WTC11 (cell line): ENCODE measurements at regions of chr3 and their contacts with region 1.

Region 1: DNA sequence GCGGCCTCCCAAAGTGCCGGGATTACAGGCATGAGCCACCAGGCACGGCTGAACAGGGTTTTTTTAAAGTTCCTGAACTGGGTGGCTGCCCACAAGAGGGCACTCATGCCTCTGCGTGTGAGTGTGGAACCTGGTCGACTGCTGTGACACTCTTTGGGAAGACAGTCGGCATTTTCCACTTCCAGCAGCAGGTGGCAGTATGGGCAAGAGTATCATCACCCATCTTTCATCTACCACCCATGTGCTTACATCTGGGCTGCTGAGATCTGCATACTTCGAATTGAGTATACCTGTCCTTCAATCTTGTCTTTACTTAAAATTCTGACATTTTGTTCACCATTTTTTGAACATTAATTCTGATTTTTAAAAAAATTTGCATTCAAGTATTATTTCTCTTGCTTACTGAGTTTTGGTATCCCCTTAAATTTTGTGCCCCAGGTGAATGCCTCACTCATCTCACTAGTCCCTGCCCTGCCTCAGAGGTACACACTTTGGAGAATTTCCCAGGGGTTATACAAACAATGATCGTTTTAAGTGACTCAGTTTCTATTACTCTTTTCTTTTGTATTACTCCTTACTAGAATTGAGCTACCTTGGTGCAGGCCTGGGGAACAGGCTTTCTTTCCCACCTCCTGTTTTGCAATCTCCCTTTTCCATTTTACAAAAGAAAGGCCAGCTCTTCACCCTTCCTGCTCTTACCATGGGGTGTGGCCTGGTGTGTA is 11.8 kb downstream of the CLEC3B start:
- DNase-seq: peak; percentile 94
- ATAC-seq: peak; percentile 79
- H3K4me3 Mint-ChIP-seq: peak overlapping the region; percentile 43
- H3K27ac Mint-ChIP-seq: no peak overlapping the region
- H3K4me1 Mint-ChIP-seq: peaks cover 27% of the 10 kb centered on the region
- H3K27me3 Mint-ChIP-seq: peaks cover 51% of the 10 kb centered on the region
- CTCF ChIP-seq: peak; percentile 70

Region 2: GRCh38 chr3:45055411-45056143 is 17.7 kb after region 1 on chr3:
- CTCF ChIA-PET with region 1: interaction called, 20 read pairs
- POLR2A ChIA-PET with region 1: no interaction called
- DNase-seq: peak; percentile 34
- ATAC-seq: peak; percentile 67
- H3K4me3 Mint-ChIP-seq: no peak overlapping the region
- H3K27ac Mint-ChIP-seq: no peak overlapping the region
- H3K4me1 Mint-ChIP-seq: peaks cover 19% of the 10 kb centered on the region
- H3K27me3 Mint-ChIP-seq: peaks cover 92% of the 10 kb centered on the region
- CTCF ChIP-seq: 0 out of 2 replicates have a peak, but pooled peaks have one; percentile 11

Region 3: GRCh38 chr3:45218578-45219390 is 180.9 kb after region 1 on chr3:
- CTCF ChIA-PET with region 1: interaction called, 11 read pairs
- POLR2A ChIA-PET with region 1: no interaction called
- DNase-seq: no peak
- ATAC-seq: no peak
- H3K4me3 Mint-ChIP-seq: no peak overlapping the region
- H3K27ac Mint-ChIP-seq: no peak overlapping the region
- H3K4me1 Mint-ChIP-seq: peaks cover 13% of the 10 kb centered on the region
- H3K27me3 Mint-ChIP-seq: peaks cover 8% of the 10 kb centered on the region
- CTCF ChIP-seq: no peak

Region 4: DNA sequence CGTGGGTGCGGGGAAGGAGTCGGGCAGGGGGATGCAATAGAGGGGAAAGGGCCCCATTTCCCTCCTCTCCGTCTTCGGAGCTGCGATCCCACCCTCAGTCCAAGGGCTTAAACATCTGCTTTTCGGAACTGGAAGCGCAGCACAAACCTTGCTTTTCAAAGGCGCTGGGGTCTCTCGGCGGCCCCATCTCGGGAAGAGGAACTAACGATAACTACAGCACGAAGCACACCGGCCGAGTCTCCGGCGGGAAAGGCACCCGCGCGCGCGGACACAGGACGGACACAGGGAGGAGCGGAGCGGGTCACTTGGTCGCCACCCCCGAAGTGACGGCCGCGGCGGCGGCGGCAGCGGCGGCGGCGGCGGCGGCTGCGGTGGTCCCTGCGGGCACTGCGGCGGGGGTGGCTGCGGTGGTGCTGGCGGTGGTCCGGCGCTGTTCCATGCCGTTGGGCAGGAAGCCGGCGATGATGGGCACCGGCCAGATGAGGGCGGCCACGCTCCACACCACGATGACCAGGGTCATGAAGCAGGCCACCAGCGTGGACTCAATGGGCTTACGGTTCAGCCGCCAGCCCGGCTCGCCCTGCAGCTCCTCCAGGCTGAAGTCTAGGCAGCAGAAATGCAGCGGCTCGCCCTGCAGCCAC is 187.0 kb after region 1 on chr3:
- CTCF ChIA-PET with region 1: interaction called, 11 read pairs
- POLR2A ChIA-PET with region 1: no interaction called
- DNase-seq: peak; percentile 81
- ATAC-seq: peak; percentile 73
- H3K4me3 Mint-ChIP-seq: peak overlapping the region; percentile 91
- H3K27ac Mint-ChIP-seq: no peak overlapping the region
- H3K4me1 Mint-ChIP-seq: peaks cover 34% of the 10 kb centered on the region
- H3K27me3 Mint-ChIP-seq: peaks cover 33% of the 10 kb centered on the region
- CTCF ChIP-seq: peak; percentile 17; the same call in 1 of the 2 replicates

Region 5: GRCh38 chr3:45473841-45474240 is 435.9 kb after region 1 on chr3:
- CTCF ChIA-PET with region 1: no interaction called
- POLR2A ChIA-PET with region 1: no interaction called
- DNase-seq: no peak
- ATAC-seq: no peak
- H3K4me3 Mint-ChIP-seq: no peak overlapping the region
- H3K27ac Mint-ChIP-seq: no peak overlapping the region; the same call in 1 of the 2 replicates
- H3K4me1 Mint-ChIP-seq: peaks cover 4% of the 10 kb centered on the region
- H3K27me3 Mint-ChIP-seq: no peaks in the 10 kb centered on the region
- CTCF ChIP-seq: no peak

Region 6: DNA sequence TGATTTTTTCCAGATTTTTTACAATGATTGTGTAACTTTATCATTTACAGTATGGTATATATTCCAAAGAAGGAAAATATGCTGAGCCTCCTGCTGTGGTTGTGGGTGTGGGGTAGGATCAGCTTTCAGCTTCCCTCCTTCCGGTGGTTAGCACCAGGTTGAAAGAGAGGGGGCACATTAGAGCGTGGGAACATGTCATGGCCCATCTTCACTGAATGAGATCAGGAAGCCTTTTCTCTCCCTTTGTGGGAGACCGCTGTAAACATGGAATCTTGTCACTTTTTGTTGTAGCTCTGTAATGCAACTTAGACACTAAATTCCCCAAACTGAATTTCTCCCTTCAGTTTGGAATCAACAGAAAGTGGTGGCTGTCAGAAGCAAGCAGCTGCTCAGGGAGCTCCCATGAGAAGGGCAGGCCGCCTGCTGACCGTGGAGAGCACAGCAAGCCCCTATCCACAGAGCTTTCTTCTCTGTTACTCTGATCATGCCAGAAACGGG is 470.0 kb after region 1 on chr3:
- CTCF ChIA-PET with region 1: interaction called, 43 read pairs
- POLR2A ChIA-PET with region 1: no interaction called
- DNase-seq: peak; percentile 60
- ATAC-seq: peak; percentile 66
- H3K4me3 Mint-ChIP-seq: no peak overlapping the region
- H3K27ac Mint-ChIP-seq: no peak overlapping the region
- H3K4me1 Mint-ChIP-seq: 0 out of 2 replicates have a peak, but pooled peaks cover 3% of the 10 kb centered on the region
- H3K27me3 Mint-ChIP-seq: no peaks in the 10 kb centered on the region
- CTCF ChIP-seq: 0 out of 2 replicates have a peak, but pooled peaks have one; percentile 13